Natural killer cell (primary cell): ENCODE measurements at regions of chr9 and their contacts with region 1.

Region 1: DNA sequence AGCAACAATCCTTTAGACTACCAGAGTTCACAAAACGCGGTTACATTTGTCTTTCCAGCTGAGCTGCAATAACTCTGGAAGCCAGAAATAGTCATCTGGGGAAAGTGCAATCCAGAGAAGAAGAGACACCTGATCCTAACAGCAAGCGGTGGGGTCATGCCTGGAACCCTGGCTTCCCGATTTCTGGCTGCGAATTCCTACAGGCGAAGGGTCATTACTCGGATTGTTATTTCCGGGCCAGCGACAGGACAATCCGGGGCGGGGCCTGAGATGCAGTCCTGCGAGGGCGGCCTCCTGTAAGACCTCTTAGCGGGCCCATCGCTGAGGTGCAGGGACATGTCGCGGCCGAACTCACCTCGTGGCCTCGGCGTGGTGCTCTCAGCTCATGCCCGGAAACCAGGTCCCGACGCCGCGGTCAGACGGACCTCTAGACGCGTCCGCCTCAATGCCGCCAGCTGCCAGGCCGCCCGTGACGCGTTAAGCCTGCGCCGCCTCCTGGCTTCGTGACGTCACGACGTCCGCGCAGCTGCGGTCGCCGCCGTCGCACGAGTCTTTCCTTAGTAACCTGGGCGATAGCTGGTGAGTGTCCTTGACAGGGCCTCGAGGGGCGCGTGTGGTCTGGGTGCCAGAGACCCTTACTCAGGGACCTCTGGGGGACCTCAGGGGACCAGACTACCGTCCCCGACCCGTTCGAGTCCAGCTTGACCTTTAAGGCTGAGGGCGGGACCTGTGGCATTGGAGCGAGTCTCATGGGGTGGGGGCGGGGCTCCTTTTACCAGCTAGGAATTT is at the starts of genes MRRF and RBM18:
- DNase-seq: peak; percentile 96
- ATAC-seq: peak; percentile 78 to 91 (median 82)
- H3K4me3 ChIP-seq: peak within 1 kb of the TSS; percentile 88
- H3K4me3 Mint-ChIP-seq: peak within 1 kb of the TSS; percentile 99
- H3K27ac ChIP-seq: peak within 1 kb of the TSS; percentile 85
- H3K27ac Mint-ChIP-seq: peak within 1 kb of the TSS; percentile 99 to 100
- H3K4me1 ChIP-seq: peaks cover 13% of the 10 kb centered on the region
- H3K4me1 Mint-ChIP-seq: peaks cover 57% of the 10 kb centered on the region in 2 donors
- H3K27me3 ChIP-seq: no peaks in the 10 kb centered on the region
- H3K27me3 Mint-ChIP-seq: no peaks in the 10 kb centered on the region
- CTCF ChIP-seq: no peak
- total RNA-seq, gene MRRF: 17.7 to 29.9 (median 21.3) TPM
- total RNA-seq, gene RBM18: 24.9 to 30.9 (median 29.7) TPM

Region 2: DNA sequence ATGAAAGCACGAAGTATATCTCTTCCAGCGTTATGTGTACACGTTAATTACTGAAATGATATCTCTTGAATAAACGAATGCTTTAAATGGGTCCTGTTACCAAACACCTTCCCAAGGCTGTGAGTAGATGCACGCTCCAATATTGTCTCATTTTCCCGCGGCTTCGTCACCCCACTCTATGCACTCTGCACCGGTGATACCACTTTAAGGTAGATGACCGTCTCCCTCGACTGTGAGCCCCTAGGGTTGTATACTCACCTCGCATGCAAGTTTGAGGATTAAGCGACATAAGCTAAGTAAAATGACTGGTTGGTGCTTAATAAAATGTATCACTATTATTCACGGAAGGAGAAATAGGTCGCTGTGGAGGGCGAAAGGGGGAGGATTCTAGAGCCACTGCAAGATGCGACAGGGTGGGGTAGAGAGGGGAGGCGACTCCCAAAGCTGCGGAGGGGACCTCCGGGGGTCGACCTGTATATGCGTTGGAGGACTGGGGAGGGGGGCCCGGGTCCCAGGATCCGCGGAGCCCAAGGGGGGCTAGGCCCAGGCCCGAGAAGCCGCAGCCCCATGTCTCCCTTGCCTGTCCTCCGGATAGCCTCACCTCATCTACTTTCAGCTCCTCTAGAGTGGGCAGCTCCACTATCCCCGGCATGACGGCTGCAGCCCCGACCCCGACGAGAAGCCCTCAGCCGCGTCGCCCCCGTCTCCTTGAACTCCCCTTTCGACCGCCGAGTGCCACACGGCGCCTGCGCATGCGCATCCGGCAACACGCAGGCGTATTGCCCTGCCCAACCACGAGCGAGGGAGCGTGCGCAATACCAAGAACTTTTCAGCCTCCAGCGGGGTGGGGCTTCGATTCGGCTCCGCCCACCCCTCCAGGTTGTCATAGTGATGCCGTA is 105.3 kb before region 1 on chr9 and contains the starts of genes MORN5 and NDUFA8:
- intact Hi-C with region 1: loop called (anchors 1 kb)
- DNase-seq: peak; percentile 95 to 99
- ATAC-seq: peak; percentile 94 to 96 (median 96)
- H3K4me3 ChIP-seq: peak within 1 kb of the TSS; percentile 80
- H3K4me3 Mint-ChIP-seq: peak within 1 kb of the TSS; percentile 99
- H3K27ac ChIP-seq: peak within 1 kb of the TSS; percentile 69
- H3K27ac Mint-ChIP-seq: peak within 1 kb of the TSS; percentile 93 to 99
- H3K4me1 ChIP-seq: peaks cover 16% of the 10 kb centered on the region
- H3K4me1 Mint-ChIP-seq: peaks cover 42 to 43% of the 10 kb centered on the region in 2 donors
- H3K27me3 ChIP-seq: no peaks in the 10 kb centered on the region
- H3K27me3 Mint-ChIP-seq: peaks cover 23 to 33% of the 10 kb centered on the region in 2 donors
- CTCF ChIP-seq: no peak
- total RNA-seq, gene MORN5: not detected
- total RNA-seq, gene NDUFA8: 6.6 to 15.9 (median 10.8) TPM